Pancreas (tissue), 10 donors: ENCODE measurements at regions of chr10 and their contacts with region 1.

Region 1: DNA sequence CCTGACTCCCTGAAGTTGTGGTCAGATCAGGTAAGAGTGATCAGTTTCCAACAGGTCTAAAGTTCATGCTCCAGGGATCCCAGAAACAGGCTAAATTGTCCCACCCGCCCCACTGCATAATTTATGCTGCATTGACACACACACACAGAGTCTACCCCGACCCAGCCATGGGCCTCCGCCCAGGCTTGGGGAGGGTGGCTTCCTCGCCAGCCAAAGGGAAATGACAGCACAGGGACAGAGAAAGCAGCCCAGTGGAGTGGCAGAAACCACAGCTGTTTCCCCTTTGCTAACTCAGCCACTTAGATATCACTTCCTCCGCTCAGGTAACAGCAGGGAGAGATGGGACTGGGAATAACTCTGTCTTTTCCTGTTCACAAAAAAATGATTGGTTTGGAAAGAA is 9.4 kb downstream of the SH3PXD2A start:
- DNase-seq: no peak
- ATAC-seq: peak in 3 of 4 donors; percentile 37 to 58 (median 46)
- H3K4me3 ChIP-seq: no peak overlapping the region
- H3K27ac ChIP-seq: no peak overlapping the region
- H3K4me1 ChIP-seq: peaks cover 0 to 16% (median 8%) of the 10 kb centered on the region in 3 donors
- H3K27me3 ChIP-seq: no peaks in the 10 kb centered on the region
- CTCF ChIP-seq: no peak

Region 2: GRCh38 chr10:103727546-103727963 is 118.4 kb before region 1 on chr10:
- intact Hi-C with region 1: loop called in 1 of 3 experiments (anchors 10 kb)
- DNase-seq: peak in 1 of 6 donors; percentile 22
- ATAC-seq: no peak
- H3K4me3 ChIP-seq: no peak overlapping the region
- H3K27ac ChIP-seq: no peak overlapping the region
- H3K4me1 ChIP-seq: peaks cover 4 to 8% (median 8%) of the 10 kb centered on the region in 3 donors
- H3K27me3 ChIP-seq: no peaks in the 10 kb centered on the region
- CTCF ChIP-seq: no peak